AG04450 (cell line): ENCODE measurements at regions of chr15 and their contacts with region 1.

Region 1: DNA sequence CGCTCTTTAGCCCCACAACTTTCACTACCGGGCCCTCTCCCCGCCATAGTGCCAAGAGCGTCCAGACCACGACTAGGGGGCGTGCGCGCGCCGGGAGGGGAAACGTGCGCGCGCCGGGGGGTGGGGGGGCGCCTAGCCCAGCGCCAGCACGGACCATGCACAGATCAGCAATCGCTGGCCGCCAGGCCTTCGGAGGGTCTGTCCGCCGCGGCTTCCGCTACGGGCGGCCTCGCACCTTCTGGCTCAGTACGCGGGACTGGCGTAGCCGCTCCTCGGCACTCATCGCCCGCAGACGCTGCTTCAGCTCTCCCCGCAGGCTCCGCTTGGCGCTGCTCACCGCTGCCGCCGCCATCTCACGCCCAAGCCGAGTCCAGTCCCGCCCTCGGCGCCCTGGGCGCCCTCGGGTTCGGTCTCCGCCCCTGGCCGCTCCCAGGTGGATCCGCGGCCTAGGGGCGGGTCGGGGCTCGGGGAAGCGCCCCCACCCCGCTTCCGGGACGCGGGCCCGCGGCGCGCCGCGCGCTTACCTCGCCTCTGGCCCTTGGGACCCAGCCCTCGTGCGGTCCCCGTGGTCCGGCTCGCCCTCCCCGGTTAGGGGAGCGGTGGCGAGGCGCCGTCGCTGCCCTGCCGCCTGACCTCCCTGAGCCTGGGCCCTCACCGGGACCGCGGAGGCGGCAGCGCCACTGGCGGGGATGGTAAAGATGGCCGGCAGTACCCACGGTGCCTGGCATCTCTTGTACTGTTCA is at the start of gene MTHFS:
- DNase-seq: no peak
- H3K4me3 ChIP-seq: peak within 1 kb of the TSS; percentile 79
- H3K27ac ChIP-seq: no peak within 1 kb of the TSS
- H3K27me3 ChIP-seq: no peaks in the 10 kb centered on the region
- CTCF ChIP-seq: peak; percentile 56
- polyA plus RNA-seq, gene MTHFS: 19.0 and 20.0 TPM in 2 replicates

Region 2: DNA sequence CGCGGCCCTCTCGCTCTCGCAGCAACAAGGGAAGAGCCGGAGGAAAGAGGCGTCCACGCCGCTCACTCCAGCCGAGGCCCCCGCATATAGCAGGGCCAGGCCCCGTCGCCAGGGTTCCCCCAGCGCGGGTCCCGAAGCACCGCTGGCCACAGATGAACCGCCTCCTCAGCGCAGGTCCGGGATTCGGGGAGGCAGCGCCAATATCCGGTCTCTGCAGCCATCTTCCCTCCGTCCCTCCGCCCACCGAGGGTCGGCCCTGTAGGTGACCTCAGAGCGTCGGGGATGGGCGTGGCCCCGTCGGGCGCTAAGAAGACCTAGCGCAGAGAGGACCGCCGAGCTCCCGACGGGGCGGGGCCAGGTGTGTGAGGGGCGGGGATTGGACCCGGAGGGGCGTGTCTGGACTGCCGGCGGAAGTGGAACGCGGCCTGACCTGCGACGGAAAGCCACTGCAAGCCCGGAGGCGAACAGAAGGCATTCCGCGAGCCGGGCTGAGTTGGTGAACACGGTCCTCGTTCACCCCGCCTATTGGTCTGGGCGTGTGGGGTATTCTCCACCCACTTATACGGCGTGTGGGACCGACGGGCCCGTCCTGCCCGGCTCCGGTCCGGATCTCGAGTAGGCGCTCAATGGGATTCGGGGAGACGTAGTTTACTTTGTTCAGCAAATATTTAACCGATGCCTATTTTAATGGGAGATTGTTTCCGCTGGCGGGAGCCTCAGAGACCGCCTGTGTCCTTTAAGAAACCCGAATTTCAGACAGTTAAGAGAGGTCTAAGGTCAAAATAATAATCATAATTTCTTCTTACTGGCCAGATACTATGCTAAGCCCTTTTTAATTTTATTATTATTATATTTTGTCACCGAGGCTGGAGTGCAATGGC is 26.9 kb after region 1 on chr15:
- CTCF ChIA-PET with region 1: interaction called, 26 read pairs
- POLR2A ChIA-PET with region 1: interaction called, 6 read pairs
- DNase-seq: peak; percentile 81
- H3K4me3 ChIP-seq: peak overlapping the region; percentile 88
- H3K27ac ChIP-seq: peak overlapping the region; percentile 90
- H3K27me3 ChIP-seq: no peaks in the 10 kb centered on the region
- CTCF ChIP-seq: no peak

Region 3: DNA sequence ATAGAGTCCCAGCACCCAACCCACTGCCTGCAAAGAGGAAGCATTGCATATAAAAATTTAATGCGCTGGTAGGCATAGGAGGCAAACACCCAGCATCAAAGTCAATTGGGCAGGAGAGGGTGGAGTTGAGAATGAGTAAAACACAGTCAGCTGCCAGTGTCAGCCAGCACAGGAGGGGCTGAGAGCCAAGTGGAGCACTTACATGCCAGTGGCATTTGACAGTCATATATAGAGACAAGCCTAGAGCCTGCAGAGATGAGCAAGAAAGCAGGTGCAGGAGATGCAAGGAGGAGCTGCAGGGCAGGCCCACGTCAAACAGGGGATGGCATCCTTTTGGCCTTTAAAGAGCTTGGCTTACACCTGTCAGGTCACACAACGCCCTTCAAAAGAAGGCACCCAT is 135.0 kb after region 1 on chr15:
- CTCF ChIA-PET with region 1: no interaction called
- POLR2A ChIA-PET with region 1: no interaction called
- DNase-seq: no peak
- H3K4me3 ChIP-seq: no peak overlapping the region
- H3K27ac ChIP-seq: no peak overlapping the region
- H3K27me3 ChIP-seq: no peaks in the 10 kb centered on the region
- CTCF ChIP-seq: no peak